Tibial artery (tissue), 4 donors: ENCODE measurements at regions of chr17 and their contacts with region 1.

Region 1: DNA sequence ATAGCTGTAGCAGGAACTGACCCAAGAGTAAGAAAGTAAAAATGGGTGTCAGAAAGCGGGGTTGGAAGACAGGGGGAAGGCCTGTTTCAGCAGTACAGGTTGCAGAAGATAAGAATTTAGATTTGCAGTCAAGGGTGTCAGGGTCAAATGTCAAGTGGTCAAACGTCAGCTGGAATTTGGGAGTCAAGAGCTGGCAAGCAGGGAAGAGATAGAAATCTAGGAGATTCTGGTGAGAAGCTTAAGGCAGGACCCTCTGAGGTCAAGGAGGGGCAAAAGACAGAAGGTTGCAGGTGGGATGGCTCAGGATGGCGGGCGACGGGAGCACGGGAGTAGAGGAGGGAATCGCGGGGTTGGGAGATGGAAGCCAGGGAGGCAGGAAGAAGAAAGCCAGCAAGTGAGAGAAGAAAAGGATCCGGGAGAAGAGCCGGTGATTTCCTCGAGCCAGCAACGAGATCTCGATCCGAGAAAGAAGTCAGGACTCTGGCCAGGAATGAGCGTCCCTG is 335 bp downstream of the SLC25A35 start:
- DNase-seq: no peak
- H3K4me3 ChIP-seq: peak overlapping the region; percentile 62 to 80
- H3K27ac ChIP-seq: peak overlapping the region; percentile 84
- H3K4me1 ChIP-seq: peaks cover 0 to 14% (median 7%) of the 10 kb centered on the region in 4 donors
- H3K27me3 ChIP-seq: no peaks in the 10 kb centered on the region
- CTCF ChIP-seq: no peak

Region 2: DNA sequence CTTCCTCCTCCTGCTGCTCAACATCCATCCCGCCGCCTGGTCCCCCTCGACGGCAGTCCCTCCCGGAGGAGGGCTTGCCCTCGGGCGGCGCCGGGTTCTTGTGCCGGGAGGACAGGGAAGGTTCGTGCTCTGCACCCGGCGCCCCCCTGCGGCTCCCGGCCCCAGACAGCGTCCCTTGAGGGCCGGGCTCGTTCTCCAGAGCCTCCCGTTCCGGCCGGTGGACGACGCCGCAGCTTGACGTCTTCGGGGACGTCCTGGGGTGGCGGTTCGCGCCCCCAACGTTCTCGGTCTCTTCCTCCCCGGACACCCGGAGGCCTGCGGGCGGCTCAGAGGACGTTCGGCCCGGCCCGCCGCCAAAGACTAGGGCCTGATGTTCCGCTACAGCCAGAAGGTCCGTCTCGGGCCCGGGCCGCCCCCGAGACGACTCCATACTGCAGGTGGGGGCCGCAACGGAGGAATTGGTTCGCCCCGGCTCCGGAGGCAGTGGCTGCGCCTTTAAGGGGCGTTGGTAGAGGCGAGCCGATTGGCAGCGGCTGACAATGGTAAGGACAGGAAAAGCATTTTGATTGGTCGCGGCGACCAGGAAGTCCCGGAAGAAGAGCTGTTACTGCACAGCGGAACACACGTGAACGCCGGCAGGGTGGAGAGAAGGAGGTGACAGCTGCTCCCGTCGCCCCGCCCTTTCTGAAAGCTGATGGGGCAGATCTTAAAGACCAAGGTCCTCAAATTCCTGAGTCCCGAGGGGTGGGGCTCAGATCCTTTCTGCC is 105.0 kb before region 1 on chr17 and contains the start of gene BORCS6:
- intact Hi-C with region 1: loop called (anchors 10 kb)
- DNase-seq: peak; percentile 99
- H3K4me3 ChIP-seq: peak within 1 kb of the TSS; percentile 89 to 93
- H3K27ac ChIP-seq: peak within 1 kb of the TSS; percentile 97 to 98
- H3K4me1 ChIP-seq: peaks cover 0 to 40% (median 35%) of the 10 kb centered on the region in 4 donors
- H3K27me3 ChIP-seq: no peaks in the 10 kb centered on the region
- CTCF ChIP-seq: no peak

Region 3: GRCh38 chr17:8248751-8249607 is 45.9 kb before region 1 on chr17 and contains the start of gene PFAS:
- intact Hi-C with region 1: loop called (anchors 5 kb)
- DNase-seq: peak; percentile 93 to 96
- H3K4me3 ChIP-seq: peak within 1 kb of the TSS; percentile 62 to 86
- H3K27ac ChIP-seq: peak within 1 kb of the TSS; percentile 95 to 96
- H3K4me1 ChIP-seq: peaks cover 0 to 18% (median 10%) of the 10 kb centered on the region in 4 donors
- H3K27me3 ChIP-seq: no peaks in the 10 kb centered on the region
- CTCF ChIP-seq: peak in 1 of 2 experiments; percentile 9